Activated CD4-positive, alpha-beta T cell treated with anti-CD3 and anti-CD28 coated beads for 36 hours (primary cell): ENCODE measurements at regions of chr12 and their contacts with region 1.

Region 1: DNA sequence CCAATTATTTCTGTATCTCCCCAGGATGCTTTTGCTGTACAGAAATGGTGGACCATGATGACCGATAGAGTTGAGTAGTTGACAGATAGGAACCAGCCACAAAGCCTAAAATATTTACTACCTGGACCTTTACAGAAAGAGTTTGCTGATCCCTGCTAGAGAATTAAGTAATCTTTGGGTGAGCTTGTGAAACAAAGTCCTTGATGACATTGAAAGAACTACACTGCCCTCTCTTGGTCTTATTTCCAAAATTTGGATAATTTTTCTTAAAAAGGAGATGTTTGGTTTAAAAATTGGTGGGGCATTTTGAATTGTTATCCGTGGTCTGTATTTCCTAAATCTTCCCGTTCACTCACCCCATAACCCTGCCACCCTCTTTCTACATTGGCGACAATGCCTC is 13.7 kb upstream of the TCTN1 start:
- DNase-seq: no peak
- ATAC-seq: peak; percentile 35
- H3K4me3 Mint-ChIP-seq: no peak overlapping the region
- H3K27ac Mint-ChIP-seq: peak overlapping the region; percentile 13
- H3K4me1 Mint-ChIP-seq: peaks cover 9% of the 10 kb centered on the region
- H3K27me3 Mint-ChIP-seq: no peaks in the 10 kb centered on the region

Region 2: GRCh38 chr12:110403146-110403975 is 196.9 kb before region 1 on chr12 and contains the start of gene ANAPC7:
- CTCF ChIA-PET with region 1: no interaction called
- POLR2A ChIA-PET with region 1: no interaction called
- intact Hi-C with region 1: loop called in 1 of 2 experiments (anchors 5 kb)
- DNase-seq: peak; percentile 93
- ATAC-seq: peak; percentile 94
- H3K4me3 Mint-ChIP-seq: peak within 1 kb of the TSS; percentile 88
- H3K27ac Mint-ChIP-seq: peak within 1 kb of the TSS; percentile 99
- H3K4me1 Mint-ChIP-seq: peaks cover 21% of the 10 kb centered on the region
- H3K27me3 Mint-ChIP-seq: no peaks in the 10 kb centered on the region
- total RNA-seq, gene ANAPC7: 52.6 to 63.6 TPM

Region 3: GRCh38 chr12:110501752-110502738 is 98.2 kb before region 1 on chr12 and contains the starts of genes RAD9B and VPS29:
- CTCF ChIA-PET with region 1: interaction called, 240 read pairs
- POLR2A ChIA-PET with region 1: no interaction called
- intact Hi-C with region 1: loop called in 1 of 2 experiments (anchors 1 kb)
- DNase-seq: peak; percentile 100
- ATAC-seq: peak; percentile 97
- H3K4me3 Mint-ChIP-seq: peak within 1 kb of the TSS; percentile 95
- H3K27ac Mint-ChIP-seq: peak within 1 kb of the TSS; percentile 94
- H3K4me1 Mint-ChIP-seq: peaks cover 28% of the 10 kb centered on the region
- H3K27me3 Mint-ChIP-seq: no peaks in the 10 kb centered on the region
- total RNA-seq, gene RAD9B: 1.5 to 2.2 TPM
- total RNA-seq, gene VPS29: 84.4 to 103 TPM

Region 4: DNA sequence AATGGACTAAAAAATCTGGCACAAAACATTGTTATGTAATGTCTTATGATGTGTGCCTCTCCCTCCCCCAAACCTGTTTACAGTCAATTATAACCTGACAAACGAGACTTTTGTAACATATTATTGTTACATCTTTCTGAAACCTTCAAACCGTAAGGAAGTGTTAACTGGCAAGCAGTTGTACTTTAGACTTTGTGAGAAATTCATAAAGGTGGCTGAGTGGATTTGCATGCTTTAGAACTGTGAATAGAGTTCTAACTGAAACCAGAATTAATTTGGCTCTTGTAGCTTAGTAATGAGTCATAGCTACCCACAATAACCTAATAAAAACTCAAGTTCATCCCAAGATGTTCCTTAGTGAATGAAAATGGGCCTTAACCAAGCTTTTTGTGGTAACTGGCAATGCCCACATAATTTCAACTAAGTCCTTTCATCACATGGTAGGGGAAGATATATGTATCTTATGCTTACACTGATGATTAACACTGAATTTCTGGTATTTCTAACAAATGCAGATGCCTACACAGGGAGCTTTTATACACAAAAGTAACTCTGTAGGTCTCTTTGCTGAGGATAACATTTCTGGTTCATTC is 68.4 kb before region 1 on chr12:
- CTCF ChIA-PET with region 1: interaction called, 38 read pairs
- POLR2A ChIA-PET with region 1: no interaction called
- intact Hi-C with region 1: no loop called
- DNase-seq: no peak
- ATAC-seq: peak; percentile 77
- H3K4me3 Mint-ChIP-seq: no peak overlapping the region
- H3K27ac Mint-ChIP-seq: peak overlapping the region; percentile 56
- H3K4me1 Mint-ChIP-seq: peaks cover 24% of the 10 kb centered on the region
- H3K27me3 Mint-ChIP-seq: no peaks in the 10 kb centered on the region

Region 5: GRCh38 chr12:110555577-110556406 is 44.5 kb before region 1 on chr12:
- CTCF ChIA-PET with region 1: interaction called, 202 read pairs
- POLR2A ChIA-PET with region 1: interaction called, 6 read pairs
- intact Hi-C with region 1: loop called (anchors 1 kb)
- DNase-seq: no peak
- ATAC-seq: no peak
- H3K4me3 Mint-ChIP-seq: no peak overlapping the region
- H3K27ac Mint-ChIP-seq: peak overlapping the region; percentile 29
- H3K4me1 Mint-ChIP-seq: peaks cover 56% of the 10 kb centered on the region
- H3K27me3 Mint-ChIP-seq: no peaks in the 10 kb centered on the region

Region 6: DNA sequence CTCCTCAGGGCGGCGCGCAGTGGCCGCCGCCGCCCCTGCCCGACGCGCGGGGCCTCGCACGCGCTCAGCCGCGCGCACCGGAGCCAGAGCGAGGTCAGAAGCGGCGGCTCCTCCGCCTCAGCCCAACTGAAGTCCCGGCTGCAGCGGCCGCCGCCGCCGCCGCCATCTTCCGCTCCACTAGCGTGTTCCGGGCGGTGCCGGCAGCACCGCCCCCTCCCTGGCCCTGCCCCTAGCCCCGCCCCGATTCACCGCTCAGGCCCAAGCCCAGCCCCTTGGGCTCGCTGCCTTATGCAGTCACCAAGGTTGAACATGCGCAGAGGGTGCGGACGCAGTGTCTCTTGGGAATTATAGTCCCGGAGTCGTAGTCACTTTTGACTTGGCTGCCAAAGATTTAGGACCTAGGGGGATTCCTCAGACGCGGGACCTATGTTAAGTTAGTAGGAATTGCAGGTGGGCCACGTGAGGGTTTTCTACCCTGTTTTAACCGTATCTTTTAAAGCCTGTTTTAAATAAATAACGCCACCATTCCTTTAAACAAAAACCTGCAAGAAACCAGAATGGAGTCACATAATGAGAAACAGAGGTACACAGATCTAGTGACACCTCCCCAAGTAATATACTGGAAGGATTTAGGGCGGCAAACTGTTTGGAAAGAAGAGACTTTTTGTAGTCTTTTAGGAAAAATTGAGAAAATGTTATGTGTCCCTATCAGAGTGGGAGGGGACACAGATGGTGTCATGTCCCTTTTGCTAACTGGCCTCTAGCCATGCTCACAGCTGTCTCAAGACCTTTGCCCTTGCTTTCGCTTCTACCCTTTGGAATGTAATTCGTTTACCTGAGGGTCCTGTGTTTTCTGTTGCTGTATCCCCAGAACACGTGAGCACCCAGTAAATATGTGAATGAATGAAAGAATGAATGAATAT is 16.9 kb before region 1 on chr12 and contains the start of gene PPTC7:
- CTCF ChIA-PET with region 1: interaction called, 41 read pairs
- POLR2A ChIA-PET with region 1: interaction called, 4 read pairs
- intact Hi-C with region 1: no loop called
- DNase-seq: peak; percentile 99
- ATAC-seq: peak; percentile 86
- H3K4me3 Mint-ChIP-seq: peak within 1 kb of the TSS; percentile 91
- H3K27ac Mint-ChIP-seq: peak within 1 kb of the TSS; percentile 99
- H3K4me1 Mint-ChIP-seq: peaks cover 59% of the 10 kb centered on the region
- H3K27me3 Mint-ChIP-seq: no peaks in the 10 kb centered on the region
- total RNA-seq, gene PPTC7: 33.4 to 36.5 TPM